Activated naive CD4-positive, alpha-beta T cell treated with anti-CD3 and anti-CD28 coated beads, Interleukin-2, amount 10 ng/mL, durations not matched to agents 7 days and 5 days (primary cell): ENCODE measurements at regions of chr1 and their contacts with region 1.

Region 1: DNA sequence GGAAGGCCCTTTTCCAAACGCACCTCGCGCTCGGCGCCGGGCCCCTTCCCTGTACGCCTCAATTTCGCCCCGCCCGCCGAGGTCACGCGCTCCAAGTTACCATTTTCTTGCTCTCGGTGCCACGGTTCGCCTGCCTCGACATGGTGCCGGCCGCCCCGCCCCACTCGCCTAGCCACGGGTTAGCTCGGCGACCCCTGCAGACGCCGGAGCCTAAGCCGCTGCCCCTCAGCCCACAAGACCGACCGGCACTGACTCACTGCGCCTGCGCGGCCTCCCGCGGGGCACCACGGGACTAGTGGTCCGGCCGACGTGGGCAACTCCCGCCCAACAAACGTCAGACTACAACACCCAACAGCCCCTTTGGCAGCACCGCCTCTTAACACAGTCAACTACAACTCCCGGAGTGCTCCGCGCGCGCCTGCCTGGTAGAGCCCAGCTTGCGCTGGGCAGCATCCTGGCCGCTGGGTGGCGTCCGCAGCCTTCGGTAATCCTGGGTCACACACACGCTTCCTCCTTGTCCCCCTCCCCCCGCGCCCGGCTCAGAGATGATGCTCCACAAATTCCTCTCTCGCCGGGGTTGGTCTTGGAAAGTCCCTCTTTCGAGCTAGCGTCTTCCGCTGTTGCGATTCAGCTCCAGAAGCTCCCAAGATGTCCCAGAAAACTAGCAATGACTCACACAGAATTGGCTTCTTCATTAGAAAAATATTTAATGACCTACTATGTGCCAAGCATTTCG is at the start of gene TRAPPC3:
- DNase-seq: peak; percentile 100
- H3K4me3 Mint-ChIP-seq: peak within 1 kb of the TSS; percentile 95
- H3K27ac Mint-ChIP-seq: peak within 1 kb of the TSS; percentile 92
- H3K4me1 Mint-ChIP-seq: peaks cover 74% of the 10 kb centered on the region
- H3K27me3 Mint-ChIP-seq: no peaks in the 10 kb centered on the region

Region 2: GRCh38 chr1:36134505-36135329 is 14.7 kb before region 1 on chr1:
- CTCF ChIA-PET with region 1: interaction called, 13 read pairs
- DNase-seq: peak; percentile 57
- H3K4me3 Mint-ChIP-seq: no peak overlapping the region
- H3K27ac Mint-ChIP-seq: no peak overlapping the region
- H3K4me1 Mint-ChIP-seq: peaks cover 8% of the 10 kb centered on the region
- H3K27me3 Mint-ChIP-seq: no peaks in the 10 kb centered on the region

Region 3: GRCh38 chr1:36166938-36167910 is 17.8 kb after region 1 on chr1:
- CTCF ChIA-PET with region 1: interaction called, 72 read pairs
- DNase-seq: no peak
- H3K4me3 Mint-ChIP-seq: no peak overlapping the region
- H3K27ac Mint-ChIP-seq: peak overlapping the region; percentile 26
- H3K4me1 Mint-ChIP-seq: peaks cover 36% of the 10 kb centered on the region
- H3K27me3 Mint-ChIP-seq: no peaks in the 10 kb centered on the region

Region 4: DNA sequence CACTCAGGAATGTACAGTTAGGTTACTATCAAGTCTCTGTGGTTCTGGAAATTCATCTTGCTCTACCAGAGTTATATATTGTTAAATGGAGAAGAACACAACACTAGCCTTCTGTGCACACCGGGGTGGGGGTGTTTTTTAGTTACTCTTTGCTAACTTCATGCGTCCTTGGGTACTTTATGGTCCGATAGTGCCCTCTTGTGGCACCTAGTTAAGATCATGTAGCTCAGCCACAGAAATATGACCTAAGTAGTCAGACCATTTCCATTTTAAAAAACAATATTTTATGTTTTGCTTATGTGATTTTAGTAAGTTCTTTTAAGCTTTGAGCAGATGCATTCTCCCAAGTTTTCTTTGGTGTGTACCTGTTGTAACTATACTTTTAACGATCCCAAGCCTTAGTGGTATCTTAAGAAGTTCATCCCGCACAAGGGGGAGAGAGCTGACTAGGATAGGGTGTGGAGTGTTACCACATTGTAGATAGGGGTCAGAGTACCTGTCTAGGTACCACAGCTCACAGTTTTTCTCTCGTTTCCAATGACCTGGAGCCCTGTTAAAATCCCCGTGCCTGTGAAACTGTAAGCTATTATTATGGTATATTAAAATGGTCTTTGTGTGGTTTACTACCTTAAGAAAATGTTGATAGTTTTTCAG is 136.2 kb after region 1 on chr1:
- CTCF ChIA-PET with region 1: interaction called, 54 read pairs
- DNase-seq: peak; percentile 77
- H3K4me3 Mint-ChIP-seq: no peak overlapping the region
- H3K27ac Mint-ChIP-seq: peak overlapping the region; percentile 83
- H3K4me1 Mint-ChIP-seq: peaks cover 18% of the 10 kb centered on the region
- H3K27me3 Mint-ChIP-seq: no peaks in the 10 kb centered on the region